CD8-positive, alpha-beta memory T cell (primary cell): ENCODE measurements at regions of chr4 and their contacts with region 1.

Region 1: DNA sequence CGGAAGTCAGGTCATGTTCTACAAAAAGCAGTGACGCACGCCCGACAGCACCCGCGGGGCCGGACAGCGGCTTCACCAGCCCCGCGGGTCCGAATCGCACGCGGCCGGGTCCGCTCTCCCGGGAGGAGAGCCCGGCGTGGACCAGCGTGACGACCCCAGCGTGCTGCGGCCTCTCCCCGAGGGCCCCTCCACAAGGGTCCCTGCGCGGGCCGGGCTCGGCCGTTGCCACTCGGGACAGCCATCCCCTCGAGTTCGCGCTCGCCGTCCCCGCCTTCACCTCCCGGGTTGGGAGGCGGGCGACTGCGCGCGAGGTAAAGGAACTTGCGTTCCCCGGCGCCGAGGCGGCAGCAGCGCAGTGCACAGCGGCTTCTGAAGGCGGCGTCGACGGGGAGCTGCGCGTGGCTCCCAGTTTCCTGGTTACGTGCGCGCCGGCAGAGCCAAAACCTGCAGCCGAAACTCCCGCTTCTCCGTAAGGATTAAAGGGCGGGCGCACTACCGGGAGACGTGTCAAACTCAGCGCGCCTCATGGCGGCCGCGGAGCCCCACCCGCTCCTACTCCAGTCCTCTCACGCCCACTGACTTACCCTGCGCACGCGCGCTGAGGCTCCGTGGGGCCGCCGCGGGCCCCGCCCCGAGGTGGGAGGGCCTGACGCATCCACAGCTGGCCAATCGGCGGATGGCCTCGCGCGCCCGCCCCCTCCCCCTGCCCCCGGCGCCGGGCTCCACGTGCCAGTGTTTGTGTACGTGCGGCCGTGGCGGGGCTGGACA is 416 bp upstream of the LRP2BP start:
- DNase-seq: peak; percentile 93 to 98 (median 97)
- H3K4me3 ChIP-seq: peak overlapping the region; percentile 75
- H3K4me3 Mint-ChIP-seq: peak overlapping the region; percentile 94 to 98 (median 96)
- H3K27ac ChIP-seq: peak overlapping the region; percentile 98
- H3K27ac Mint-ChIP-seq: peak overlapping the region; percentile 93 to 99 (median 99)
- H3K4me1 ChIP-seq: peaks cover 16% of the 10 kb centered on the region
- H3K4me1 Mint-ChIP-seq: peaks cover 27 to 37% (median 33%) of the 10 kb centered on the region in 3 donors
- H3K27me3 ChIP-seq: no peaks in the 10 kb centered on the region
- H3K27me3 Mint-ChIP-seq: no peaks in the 10 kb centered on the region

Region 2: GRCh38 chr4:185412412-185412811 is 16.3 kb after region 1 on chr4:
- CTCF ChIA-PET with region 1: no interaction called
- POLR2A ChIA-PET with region 1: no interaction called
- DNase-seq: no peak
- H3K4me3 ChIP-seq: no peak overlapping the region
- H3K4me3 Mint-ChIP-seq: no peak overlapping the region
- H3K27ac ChIP-seq: no peak overlapping the region
- H3K27ac Mint-ChIP-seq: no peak overlapping the region
- H3K4me1 ChIP-seq: no peaks in the 10 kb centered on the region
- H3K4me1 Mint-ChIP-seq: peaks cover 0 to 4% (median 0%) of the 10 kb centered on the region in 3 donors
- H3K27me3 ChIP-seq: no peaks in the 10 kb centered on the region
- H3K27me3 Mint-ChIP-seq: no peaks in the 10 kb centered on the region

Region 3: DNA sequence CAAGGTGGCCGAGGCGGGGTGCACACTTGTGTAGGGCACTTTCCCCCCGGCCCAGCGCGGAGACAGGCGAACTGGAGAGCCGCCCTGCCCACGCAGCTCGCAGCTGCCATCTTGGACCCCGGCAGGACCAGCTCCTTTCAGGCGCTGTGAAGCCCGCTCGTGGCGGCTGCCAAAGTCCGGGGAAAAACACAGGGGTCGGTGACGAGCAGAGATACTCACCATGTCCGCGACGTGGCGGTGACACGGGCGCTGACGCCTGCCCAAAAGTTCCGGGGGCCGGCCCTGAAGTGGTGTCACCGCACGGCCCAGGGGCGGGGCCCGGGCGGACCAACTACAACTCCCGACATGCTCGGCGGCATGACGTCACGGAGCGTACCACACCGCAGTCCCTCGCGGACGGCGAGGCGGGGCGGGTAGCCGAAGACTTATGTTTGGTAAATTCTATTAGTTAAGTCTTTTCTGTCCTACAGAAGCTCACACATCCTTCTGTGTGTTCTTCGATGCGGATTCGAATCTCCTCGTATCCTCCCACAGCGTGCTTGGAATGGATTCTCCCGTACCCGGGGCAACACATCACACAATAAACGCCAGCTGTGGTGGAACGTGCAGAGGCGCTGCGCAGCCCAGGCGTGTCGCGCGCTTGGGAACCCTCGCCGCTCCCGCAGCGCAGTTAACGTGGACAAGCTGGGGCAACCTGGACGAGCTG is 29.7 kb after region 1 on chr4 and contains the start of gene UFSP2:
- CTCF ChIA-PET with region 1: interaction called, 19 read pairs
- POLR2A ChIA-PET with region 1: interaction called, 39 read pairs
- DNase-seq: peak; percentile 84 to 94 (median 90)
- H3K4me3 ChIP-seq: peak within 1 kb of the TSS; percentile 94
- H3K4me3 Mint-ChIP-seq: peak within 1 kb of the TSS; percentile 81 to 99 (median 91)
- H3K27ac ChIP-seq: peak within 1 kb of the TSS; percentile 100
- H3K27ac Mint-ChIP-seq: peak within 1 kb of the TSS; percentile 82 to 100 (median 100)
- H3K4me1 ChIP-seq: peaks cover 21% of the 10 kb centered on the region
- H3K4me1 Mint-ChIP-seq: peaks cover 32 to 43% (median 43%) of the 10 kb centered on the region in 3 donors
- H3K27me3 ChIP-seq: no peaks in the 10 kb centered on the region
- H3K27me3 Mint-ChIP-seq: peaks cover 0 to 11% of the 10 kb centered on the region in 2 donors
- total RNA-seq, gene UFSP2: 19.5 to 19.8 TPM